Pancreas (tissue), 10 donors: ENCODE measurements at regions of chr6 and their contacts with region 1.

Region 1: GRCh38 chr6:129498950-129499842 is 210.8 kb downstream of the ARHGAP18 start:
- DNase-seq: no peak
- ATAC-seq: peak; percentile 74 to 86 (median 84)
- H3K4me3 ChIP-seq: no peak overlapping the region
- H3K27ac ChIP-seq: no peak overlapping the region
- H3K4me1 ChIP-seq: peaks cover 0 to 16% (median 0%) of the 10 kb centered on the region in 3 donors
- H3K27me3 ChIP-seq: no peaks in the 10 kb centered on the region
- CTCF ChIP-seq: peak in 3 of 4 donors; percentile 10 to 55 (median 38)

Region 2: GRCh38 chr6:129567374-129567773 is 68.2 kb after region 1 on chr6:
- intact Hi-C with region 1: loop called in 2 of 3 experiments (anchors 10 kb)
- DNase-seq: no peak
- ATAC-seq: no peak
- H3K4me3 ChIP-seq: no peak overlapping the region
- H3K27ac ChIP-seq: no peak overlapping the region
- H3K4me1 ChIP-seq: no peaks in the 10 kb centered on the region
- H3K27me3 ChIP-seq: no peaks in the 10 kb centered on the region
- CTCF ChIP-seq: peak in 1 of 4 donors; percentile 10

Region 3: GRCh38 chr6:129575378-129576118 is 76.4 kb after region 1 on chr6:
- intact Hi-C with region 1: loop called in 1 of 3 experiments (anchors 10 kb)
- DNase-seq: no peak
- ATAC-seq: peak; percentile 31 to 89 (median 72)
- H3K4me3 ChIP-seq: no peak overlapping the region
- H3K27ac ChIP-seq: no peak overlapping the region
- H3K4me1 ChIP-seq: no peaks in the 10 kb centered on the region
- H3K27me3 ChIP-seq: no peaks in the 10 kb centered on the region
- CTCF ChIP-seq: peak in 3 of 4 donors; percentile 15 to 29 (median 24)